ENCODE measurements at regions of chr5 and their contacts with region 1.

Region 1: DNA sequence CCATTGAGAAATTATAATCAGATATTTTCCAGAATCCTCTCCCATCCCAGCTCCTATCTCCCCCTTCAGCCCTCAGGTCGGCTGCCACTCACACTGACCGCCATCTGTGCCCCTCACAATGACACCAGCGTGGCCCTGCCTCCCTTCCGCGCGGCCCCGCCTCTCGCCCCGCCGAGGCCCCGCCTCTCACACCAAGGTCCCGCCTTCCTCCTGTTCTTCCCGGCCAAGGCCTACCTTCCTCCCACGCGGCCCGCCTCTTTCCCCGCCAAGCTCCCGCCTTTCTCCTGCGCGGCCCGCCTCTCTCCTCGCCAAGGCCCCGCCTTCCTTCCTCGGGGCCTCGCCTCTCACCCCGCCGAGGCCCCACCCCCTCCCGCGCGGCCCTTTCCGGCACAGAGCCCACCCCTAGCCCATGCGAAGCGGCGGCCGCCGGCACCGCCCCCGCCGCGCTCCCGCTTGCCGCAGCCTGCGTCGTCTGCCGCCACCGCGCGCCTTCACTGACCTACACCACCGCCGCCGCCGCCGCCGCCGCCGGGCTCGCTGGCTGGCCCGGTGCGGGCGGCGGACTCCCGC is at the start of gene DNAJC21:
- DNase-seq: peak; percentile 92 to 100
- H3K4me3 ChIP-seq: peak within 1 kb of the TSS; percentile 64
- H3K27ac ChIP-seq: peak within 1 kb of the TSS; percentile 70
- H3K4me1 ChIP-seq: peaks cover 31% of the 10 kb centered on the region
- H3K27me3 ChIP-seq: no peaks in the 10 kb centered on the region
- CTCF ChIP-seq: no peak
- total RNA-seq, gene DNAJC21: 111 and 128 TPM in 2 replicates

Region 2: DNA sequence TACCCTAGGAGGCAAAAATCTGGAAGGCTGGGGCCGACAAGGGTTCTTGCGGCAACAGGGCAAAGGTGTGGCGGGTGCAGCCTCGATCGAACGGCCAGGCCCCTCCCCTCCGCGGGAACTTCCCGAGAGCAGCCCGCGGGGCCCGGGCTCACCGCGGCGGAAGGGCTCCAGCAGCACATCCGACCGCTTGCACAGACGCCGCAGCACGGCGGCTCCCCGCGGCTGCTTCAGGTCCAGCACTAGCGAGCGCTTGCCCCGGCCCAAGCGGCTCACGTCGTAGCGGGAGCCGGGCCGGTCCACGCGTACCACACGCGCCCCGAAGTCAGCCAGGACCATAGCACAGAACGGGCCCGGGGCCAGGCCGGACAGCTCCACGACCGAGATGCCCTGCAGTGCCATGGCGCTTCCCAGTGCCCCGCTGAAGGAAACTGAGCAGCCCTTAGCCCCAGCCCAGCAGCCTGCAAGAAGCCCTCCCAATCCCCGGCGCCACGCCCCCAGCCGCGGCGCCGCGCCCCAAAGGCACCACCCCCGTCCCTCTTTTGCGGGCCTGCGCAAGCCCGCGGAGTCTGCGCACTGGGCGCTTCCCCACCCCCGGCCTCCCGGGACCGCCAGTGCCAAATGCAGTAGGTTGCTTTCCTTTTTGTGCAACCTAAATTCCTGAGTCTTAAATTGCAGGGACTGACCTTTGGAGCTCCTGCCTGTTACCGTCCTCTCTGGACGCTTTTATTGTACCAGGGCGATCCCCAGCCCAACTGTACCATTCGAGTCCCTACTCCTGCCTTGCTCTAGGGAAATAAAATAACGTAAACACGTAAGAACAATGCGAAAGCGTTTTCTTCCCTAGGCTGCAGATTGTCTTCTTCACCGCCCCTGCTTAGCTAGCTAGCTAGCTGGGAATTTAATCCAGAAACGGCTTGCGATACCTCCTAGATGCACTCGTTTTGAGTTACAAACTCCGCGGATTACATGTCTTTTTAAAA is 921.3 kb before region 1 on chr5 and contains the start of gene AMACR:
- CTCF ChIA-PET with region 1: no interaction called
- POLR2A ChIA-PET with region 1: interaction called, 28 read pairs
- intact Hi-C with region 1: loop called (anchors 5 kb)
- DNase-seq: peak; percentile 90 to 100
- H3K4me3 ChIP-seq: peak within 1 kb of the TSS; percentile 82
- H3K27ac ChIP-seq: peak within 1 kb of the TSS; percentile 50
- H3K4me1 ChIP-seq: peaks cover 26% of the 10 kb centered on the region
- H3K27me3 ChIP-seq: no peaks in the 10 kb centered on the region
- CTCF ChIP-seq: no peak
- total RNA-seq, gene AMACR: 31.1 and 31.2 TPM in 2 replicates

Region 3: GRCh38 chr5:34043099-34043876 is 885.9 kb before region 1 on chr5 and contains the start of gene C1QTNF3:
- CTCF ChIA-PET with region 1: no interaction called
- POLR2A ChIA-PET with region 1: no interaction called
- intact Hi-C with region 1: no loop called
- DNase-seq: no peak
- H3K4me3 ChIP-seq: no peak within 1 kb of the TSS
- H3K27ac ChIP-seq: no peak within 1 kb of the TSS
- H3K4me1 ChIP-seq: no peaks in the 10 kb centered on the region
- H3K27me3 ChIP-seq: no peaks in the 10 kb centered on the region
- CTCF ChIP-seq: no peak
- total RNA-seq, gene C1QTNF3: 8.3 and 9.4 TPM in 2 replicates

Region 4: GRCh38 chr5:34587355-34588241 is 341.6 kb before region 1 on chr5:
- CTCF ChIA-PET with region 1: no interaction called
- POLR2A ChIA-PET with region 1: interaction called, 10 read pairs
- intact Hi-C with region 1: no loop called
- DNase-seq: peak in 1 of 2 experiments; percentile 86
- H3K4me3 ChIP-seq: peak overlapping the region; percentile 51
- H3K27ac ChIP-seq: peak overlapping the region; percentile 97
- H3K4me1 ChIP-seq: peaks cover 76% of the 10 kb centered on the region
- H3K27me3 ChIP-seq: no peaks in the 10 kb centered on the region
- CTCF ChIP-seq: no peak

Region 5: GRCh38 chr5:34838785-34839714 is 90.2 kb before region 1 on chr5 and contains the start of gene TTC23L:
- CTCF ChIA-PET with region 1: interaction called, 15 read pairs
- POLR2A ChIA-PET with region 1: no interaction called
- intact Hi-C with region 1: no loop called
- DNase-seq: peak; percentile 86 to 98
- H3K4me3 ChIP-seq: peak within 1 kb of the TSS; percentile 68
- H3K27ac ChIP-seq: peak within 1 kb of the TSS; percentile 21; the same call in 1 of the 2 replicates
- H3K4me1 ChIP-seq: peaks cover 6% of the 10 kb centered on the region
- H3K27me3 ChIP-seq: no peaks in the 10 kb centered on the region
- CTCF ChIP-seq: no peak
- total RNA-seq, gene TTC23L: 3.9 and 7.1 TPM in 2 replicates

Region 6: DNA sequence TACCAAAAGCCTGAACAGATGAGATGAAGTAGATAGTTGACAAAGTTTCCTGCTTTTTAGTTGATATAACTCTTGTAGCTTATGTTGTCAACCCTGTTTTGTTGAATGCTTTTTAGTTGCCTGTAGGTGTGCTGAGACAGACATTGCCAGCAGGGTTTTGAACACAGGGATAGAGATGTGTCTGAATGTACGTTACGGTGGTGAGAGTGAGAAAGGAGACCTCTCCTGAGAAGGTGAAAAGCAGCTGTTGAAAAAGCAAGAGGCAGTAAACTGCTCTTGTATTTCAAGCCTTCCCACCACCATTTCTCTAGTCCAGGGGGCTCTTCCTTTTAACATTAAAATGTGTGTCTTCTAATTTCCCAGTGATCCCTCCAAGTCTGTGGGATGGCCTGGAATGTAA is 14.8 kb after region 1 on chr5:
- CTCF ChIA-PET with region 1: interaction called, 3 read pairs
- POLR2A ChIA-PET with region 1: no interaction called
- intact Hi-C with region 1: loop called (anchors 2 kb)
- DNase-seq: no peak
- H3K4me3 ChIP-seq: no peak overlapping the region
- H3K27ac ChIP-seq: no peak overlapping the region
- H3K4me1 ChIP-seq: no peaks in the 10 kb centered on the region
- H3K27me3 ChIP-seq: no peaks in the 10 kb centered on the region
- CTCF ChIP-seq: no peak

Region 7: DNA sequence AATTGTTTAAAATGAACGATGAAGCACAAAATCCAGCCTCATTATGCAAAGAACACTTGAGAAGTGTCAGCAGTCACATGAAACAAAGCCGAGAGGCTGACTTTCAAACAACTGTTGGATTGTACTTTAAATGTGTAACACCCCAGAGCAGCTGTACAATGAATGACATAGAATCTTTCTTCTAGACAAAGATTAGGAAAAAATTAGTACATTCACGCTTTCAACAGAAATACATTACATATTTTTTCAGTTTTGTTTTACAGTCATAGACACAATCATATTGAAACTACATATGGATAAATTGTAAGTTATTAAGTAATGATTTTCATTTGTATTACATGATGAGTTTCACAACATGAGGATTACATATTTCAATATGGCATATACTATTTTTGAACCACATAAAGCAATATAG is 129.1 kb after region 1 on chr5:
- CTCF ChIA-PET with region 1: no interaction called
- POLR2A ChIA-PET with region 1: no interaction called
- intact Hi-C with region 1: no loop called
- DNase-seq: no peak
- H3K4me3 ChIP-seq: no peak overlapping the region
- H3K27ac ChIP-seq: no peak overlapping the region
- H3K4me1 ChIP-seq: no peaks in the 10 kb centered on the region
- H3K27me3 ChIP-seq: peaks cover 67% of the 10 kb centered on the region
- CTCF ChIP-seq: no peak

Region 8: DNA sequence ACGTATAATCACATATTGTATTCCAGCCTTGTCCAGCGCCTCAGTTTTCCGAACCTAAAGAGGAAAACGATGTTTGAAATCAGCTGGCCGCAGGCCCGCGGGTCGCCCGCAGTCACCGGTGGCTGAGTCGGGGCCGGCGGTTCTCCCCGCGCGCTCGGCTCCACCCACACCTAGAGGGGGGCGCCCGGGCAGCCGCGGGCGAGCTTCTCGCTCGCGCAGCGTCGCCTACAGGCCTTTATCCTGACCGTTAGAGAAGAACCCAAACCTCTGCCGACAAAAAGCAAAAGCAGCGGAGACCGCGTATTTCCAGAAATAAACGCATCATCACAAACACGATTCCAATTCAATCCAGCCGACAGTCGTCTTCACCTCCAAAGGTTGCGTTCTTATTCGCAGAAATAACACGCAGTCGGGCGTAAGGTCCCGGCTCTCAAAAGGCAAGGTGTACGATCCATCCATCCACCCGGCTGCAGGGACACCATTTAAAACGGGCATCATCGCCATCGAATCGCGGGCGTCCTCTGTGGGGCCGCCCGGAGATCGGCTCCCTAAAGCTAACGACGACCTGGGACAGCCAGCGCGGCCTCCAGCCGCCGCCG is 1946.7 kb after region 1 on chr5:
- CTCF ChIA-PET with region 1: no interaction called
- POLR2A ChIA-PET with region 1: no interaction called
- intact Hi-C with region 1: loop called (anchors 10 kb)
- DNase-seq: peak; percentile 75 to 92
- H3K4me3 ChIP-seq: peak overlapping the region; percentile 81
- H3K27ac ChIP-seq: peak overlapping the region; percentile 55
- H3K4me1 ChIP-seq: peaks cover 53% of the 10 kb centered on the region
- H3K27me3 ChIP-seq: no peaks in the 10 kb centered on the region
- CTCF ChIP-seq: peak; percentile 58; the same call in 1 of the 2 replicates